GM12878 (cell line): ENCODE measurements at regions of chr2 and their contacts with region 1.

Region 1: GRCh38 chr2:157887946-157888345 is 11.8 kb upstream of the ACVR1 start:
- DNase-seq: no peak
- ATAC-seq: no peak
- H3K4me3 ChIP-seq: no peak overlapping the region
- H3K27ac ChIP-seq: no peak overlapping the region
- H3K4me1 ChIP-seq: no peaks in the 10 kb centered on the region
- H3K27me3 ChIP-seq: no peaks in the 10 kb centered on the region; a peak in 1 of 4 replicates
- CTCF ChIP-seq: no peak
- EP300 ChIP-seq: no peak
- POLR2A ChIP-seq: no peak
- RAD21 ChIP-seq: no peak

Region 2: DNA sequence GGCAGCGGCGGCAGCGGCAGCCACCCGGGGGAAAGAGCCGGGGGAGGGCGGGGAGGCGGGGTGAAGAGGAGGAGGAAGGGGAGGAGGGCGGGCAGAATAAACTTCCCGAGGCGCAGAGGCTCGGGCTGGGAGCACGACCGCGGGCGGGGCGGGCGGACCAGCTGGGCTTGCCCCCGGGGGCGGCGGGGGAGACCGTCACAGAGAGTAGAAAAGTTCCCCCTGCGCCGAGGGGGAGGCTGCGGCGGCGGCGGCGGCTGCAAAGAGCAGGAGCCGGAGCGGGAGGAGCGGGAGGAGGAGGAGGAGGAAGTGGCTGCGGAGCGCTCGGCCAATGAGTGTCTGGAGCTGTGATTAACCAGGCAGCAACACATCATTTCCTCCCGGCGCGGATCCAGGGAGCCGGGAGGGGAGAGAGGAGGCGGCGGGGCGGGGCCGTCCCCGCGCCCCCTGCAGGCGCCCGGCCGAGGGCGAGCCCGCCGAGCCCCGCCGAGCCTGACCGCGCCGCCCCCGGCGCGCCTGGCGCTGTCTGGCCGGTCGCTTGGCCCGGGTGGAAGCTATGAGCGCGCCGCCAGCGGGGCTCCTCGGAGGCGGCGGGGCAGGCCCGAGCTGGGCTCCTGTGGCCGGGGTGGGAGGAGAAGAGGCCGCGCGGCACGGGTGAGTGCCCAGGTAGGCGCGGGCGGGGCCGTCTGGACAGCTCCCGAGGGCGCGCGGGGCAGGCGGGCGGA is 11.7 kb before region 1 on chr2 and contains the start of gene ACVR1:
- CTCF ChIA-PET with region 1: no interaction called
- POLR2A ChIA-PET with region 1: no interaction called
- RAD21 ChIA-PET with region 1: no interaction called
- SMC1A ChIA-PET with region 1: no interaction called
- in situ Hi-C with region 1: no loop called
- intact Hi-C with region 1: no loop called
- DNase-seq: no peak
- ATAC-seq: peak; percentile 91
- H3K4me3 ChIP-seq: peak within 1 kb of the TSS; percentile 76; the same call in 1 of the 2 replicates
- H3K27ac ChIP-seq: no peak within 1 kb of the TSS
- H3K4me1 ChIP-seq: no peaks in the 10 kb centered on the region
- H3K27me3 ChIP-seq: peaks cover 2 to 12% of the 10 kb centered on the region in 2 experiments; a peak in 3 of 4 replicates
- CTCF ChIP-seq: peak; percentile 5 to 34 (median 14); a peak in 1 of 6 replicates
- EP300 ChIP-seq: no peak
- POLR2A ChIP-seq: no peak
- RAD21 ChIP-seq: no peak
- polyA plus RNA-seq, gene ACVR1: not detected

Region 3: GRCh38 chr2:158204741-158205165 is 316.8 kb after region 1 on chr2:
- CTCF ChIA-PET with region 1: no interaction called
- POLR2A ChIA-PET with region 1: no interaction called
- RAD21 ChIA-PET with region 1: no interaction called
- SMC1A ChIA-PET with region 1: no interaction called
- in situ Hi-C with region 1: no loop called
- intact Hi-C with region 1: loop called (anchors 5 kb)
- DNase-seq: no peak
- ATAC-seq: peak; percentile 66
- H3K4me3 ChIP-seq: no peak overlapping the region
- H3K27ac ChIP-seq: no peak overlapping the region
- H3K4me1 ChIP-seq: no peaks in the 10 kb centered on the region
- H3K27me3 ChIP-seq: no peaks in the 10 kb centered on the region
- CTCF ChIP-seq: no peak
- EP300 ChIP-seq: no peak
- POLR2A ChIP-seq: no peak
- RAD21 ChIP-seq: no peak